OCI-LY7 (cell line): ENCODE measurements at regions of chr17 and their contacts with region 1.

Region 1: GRCh38 chr17:4412933-4413831 is 20.6 kb upstream of the SPNS3 start:
- DNase-seq: peak; percentile 94
- H3K4me3 ChIP-seq: peak overlapping the region; percentile 7
- H3K27ac ChIP-seq: peak overlapping the region; percentile 2
- H3K4me1 ChIP-seq: peaks cover 17% of the 10 kb centered on the region
- CTCF ChIP-seq: peak; percentile 93

Region 2: GRCh38 chr17:4199818-4200402 is 213.3 kb before region 1 on chr17:
- CTCF ChIA-PET with region 1: no interaction called
- POLR2A ChIA-PET with region 1: interaction called, 3 read pairs
- intact Hi-C with region 1: loop called (anchors 1 kb)
- DNase-seq: peak; percentile 75
- H3K4me3 ChIP-seq: no peak overlapping the region
- H3K27ac ChIP-seq: no peak overlapping the region
- H3K4me1 ChIP-seq: no peaks in the 10 kb centered on the region
- CTCF ChIP-seq: peak; percentile 91

Region 3: DNA sequence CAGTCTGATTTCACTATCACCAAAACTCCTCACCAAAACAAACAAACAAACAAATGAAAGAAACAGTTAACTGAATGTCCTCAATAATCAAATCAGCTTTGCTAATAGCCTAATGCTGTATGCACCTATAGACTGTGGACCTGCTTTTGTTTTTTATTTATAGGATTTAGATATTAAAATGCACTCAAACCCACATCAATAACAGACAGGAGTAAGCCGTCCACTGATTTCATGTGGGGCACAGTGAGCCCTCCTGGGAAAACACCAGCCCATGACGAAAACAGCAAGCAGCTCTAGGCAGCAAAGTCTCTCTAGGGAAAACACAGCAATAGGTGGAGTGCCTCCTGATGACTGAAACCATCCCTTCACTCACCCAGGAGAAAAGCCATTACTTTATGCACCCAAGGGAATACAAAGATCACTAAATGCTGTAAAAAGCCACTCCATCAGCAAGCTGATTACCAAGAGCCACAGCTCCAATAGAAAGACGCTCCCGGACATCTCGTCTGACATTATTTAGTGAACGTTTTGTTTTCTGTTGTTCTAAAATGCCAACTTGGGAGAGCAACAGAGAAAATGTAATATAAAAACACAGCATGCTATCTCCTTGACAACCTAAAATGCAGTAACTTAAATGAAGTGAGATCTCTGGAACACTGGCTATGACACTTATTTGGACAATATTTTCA is 197.2 kb before region 1 on chr17:
- CTCF ChIA-PET with region 1: no interaction called
- POLR2A ChIA-PET with region 1: interaction called, 4 read pairs
- intact Hi-C with region 1: loop called (anchors 1 kb)
- DNase-seq: no peak
- H3K4me3 ChIP-seq: no peak overlapping the region
- H3K27ac ChIP-seq: no peak overlapping the region
- H3K4me1 ChIP-seq: peaks cover 10% of the 10 kb centered on the region
- CTCF ChIP-seq: no peak

Region 4: DNA sequence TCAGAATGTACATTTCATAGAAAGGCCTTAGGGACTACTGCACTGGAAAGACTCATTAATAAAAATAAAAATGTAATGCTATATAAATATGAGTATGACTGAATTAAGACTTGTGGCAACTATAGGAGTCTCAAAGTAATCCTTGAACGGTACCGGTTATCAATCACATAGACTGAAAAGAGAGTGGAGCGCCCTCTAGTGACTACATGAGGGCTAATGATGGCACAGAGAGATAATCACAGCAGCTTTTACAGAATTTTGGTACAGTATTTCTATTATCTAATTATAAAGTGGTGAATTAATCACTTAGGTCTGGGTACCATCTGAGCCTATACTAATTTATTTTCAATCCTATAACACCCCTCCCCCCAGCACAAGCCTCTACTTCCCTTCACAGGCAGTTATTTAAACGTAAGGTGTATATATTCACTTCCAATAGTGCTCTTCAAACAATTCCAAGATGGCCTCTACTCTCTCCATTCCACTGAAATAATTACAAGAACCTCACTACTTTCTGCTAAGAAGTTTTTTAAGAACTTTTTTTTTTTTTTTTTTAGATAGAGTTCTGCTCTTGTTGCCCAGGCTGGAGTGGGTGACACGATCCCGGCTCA is 108.7 kb before region 1 on chr17:
- CTCF ChIA-PET with region 1: no interaction called
- POLR2A ChIA-PET with region 1: interaction called, 5 read pairs
- intact Hi-C with region 1: loop called (anchors 5 kb)
- DNase-seq: peak; percentile 65
- H3K4me3 ChIP-seq: no peak overlapping the region
- H3K27ac ChIP-seq: no peak overlapping the region
- H3K4me1 ChIP-seq: peaks cover 3% of the 10 kb centered on the region
- CTCF ChIP-seq: peak; percentile 97

Region 5: DNA sequence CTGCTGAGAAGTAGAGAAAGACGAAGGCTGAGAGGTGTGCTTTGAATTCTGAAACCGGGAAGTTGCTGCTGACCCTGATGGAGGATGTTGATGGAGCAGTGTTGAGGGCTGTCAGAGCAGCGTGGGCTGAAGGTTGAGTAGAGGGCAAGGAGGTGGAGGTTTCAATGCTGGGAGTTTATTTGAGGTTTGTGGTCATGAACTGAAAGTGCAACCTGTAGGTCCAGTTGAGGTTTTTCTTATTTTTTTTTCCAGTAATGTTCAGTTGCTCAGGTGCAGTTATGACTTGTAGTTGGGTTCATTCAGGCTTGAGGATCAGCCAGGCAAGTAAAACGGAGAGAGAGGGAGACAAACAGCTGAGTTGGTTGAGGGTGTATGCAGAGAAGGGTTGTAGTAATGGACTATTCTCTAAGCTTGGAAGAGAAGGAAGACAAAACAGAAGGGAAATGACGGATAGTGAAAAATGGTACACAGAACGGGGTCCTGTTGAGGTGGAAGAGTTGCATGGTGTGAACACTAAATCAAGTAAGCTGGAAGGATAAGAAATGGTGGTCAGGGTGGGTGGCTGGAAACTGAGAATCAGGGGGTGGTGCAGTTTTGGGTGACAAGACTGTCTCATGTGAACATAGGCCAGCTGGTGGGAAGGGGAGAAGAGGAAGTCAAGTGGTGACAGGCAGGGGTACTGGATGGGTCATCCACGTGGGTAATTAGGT is 38.0 kb before region 1 on chr17:
- CTCF ChIA-PET with region 1: interaction called, 3 read pairs
- POLR2A ChIA-PET with region 1: interaction called, 10 read pairs
- intact Hi-C with region 1: no loop called
- DNase-seq: peak; percentile 94
- H3K4me3 ChIP-seq: peak overlapping the region; percentile 61
- H3K27ac ChIP-seq: peak overlapping the region; percentile 99
- H3K4me1 ChIP-seq: peaks cover 94% of the 10 kb centered on the region
- CTCF ChIP-seq: no peak